ENCODE measurements at regions of chr20 and their contacts with region 1.

Region 1: GRCh38 chr20:62368976-62369814 is 2.1 kb upstream of the LAMA5 start:
- DNase-seq: no peak
- ATAC-seq: peak; percentile 36
- H3K4me3 ChIP-seq: peak overlapping the region; percentile 34 to 83
- H3K27ac ChIP-seq: peak overlapping the region; percentile 74; the same call in 1 of the 2 replicates
- H3K4me1 ChIP-seq: peaks cover 53 to 65% of the 10 kb centered on the region in 2 experiments
- H3K27me3 ChIP-seq: no peaks in the 10 kb centered on the region
- CTCF ChIP-seq: peak in 2 of 3 experiments; percentile 33 to 44; a peak in 3 of 6 replicates
- POLR2A ChIP-seq: no peak
- RAD21 ChIP-seq: no peak

Region 2: GRCh38 chr20:62302341-62303058 is 66.7 kb before region 1 on chr20 and contains the start of gene ADRM1:
- CTCF ChIA-PET with region 1: interaction called, 3 read pairs
- POLR2A ChIA-PET with region 1: no interaction called
- RAD21 ChIA-PET with region 1: no interaction called
- intact Hi-C with region 1: loop called (anchors 5 kb)
- DNase-seq: peak; percentile 88
- ATAC-seq: peak; percentile 78
- H3K4me3 ChIP-seq: peak within 1 kb of the TSS; percentile 95 to 99
- H3K27ac ChIP-seq: peak within 1 kb of the TSS; percentile 95
- H3K4me1 ChIP-seq: peaks cover 17 to 40% of the 10 kb centered on the region in 2 experiments
- H3K27me3 ChIP-seq: no peaks in the 10 kb centered on the region
- CTCF ChIP-seq: peak; percentile 77 to 95 (median 93)
- POLR2A ChIP-seq: peak; percentile 23
- RAD21 ChIP-seq: peak; percentile 66
- total RNA-seq, gene ADRM1: 158 TPM

Region 3: DNA sequence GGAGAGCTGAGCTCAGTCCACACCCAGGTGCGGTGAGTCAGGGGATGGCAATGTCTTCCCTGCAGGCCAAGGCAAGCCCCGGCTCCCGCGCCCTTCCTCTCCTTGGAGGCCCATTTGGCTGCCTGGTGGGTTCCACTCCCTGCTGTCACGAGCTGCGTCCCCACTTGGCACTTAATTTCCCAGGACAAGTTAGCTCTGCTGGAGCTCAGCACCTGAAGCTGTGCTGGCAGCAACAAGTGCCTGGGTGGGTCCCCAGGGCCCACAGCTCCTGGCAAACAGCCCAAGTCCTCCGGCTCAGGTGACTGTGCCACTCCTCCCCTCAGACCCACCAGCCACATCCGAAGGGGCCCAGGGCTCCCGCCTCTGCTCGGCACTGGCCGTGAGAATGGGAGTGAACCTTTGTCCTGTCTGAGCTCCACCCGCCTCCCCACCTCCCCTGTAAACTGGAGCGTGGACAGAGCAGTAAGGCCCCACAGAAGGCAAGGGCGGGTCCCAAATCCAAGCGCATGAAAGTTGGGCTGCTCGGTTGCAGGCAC is 19.0 kb before region 1 on chr20:
- CTCF ChIA-PET with region 1: no interaction called
- POLR2A ChIA-PET with region 1: interaction called, 12 read pairs
- RAD21 ChIA-PET with region 1: interaction called in 1 of 2 experiments, 3 read pairs
- intact Hi-C with region 1: no loop called
- DNase-seq: peak; percentile 87
- ATAC-seq: peak; percentile 87
- H3K4me3 ChIP-seq: peak overlapping the region; percentile 19 to 52
- H3K27ac ChIP-seq: peak overlapping the region; percentile 99
- H3K4me1 ChIP-seq: peaks cover 26 to 48% of the 10 kb centered on the region in 2 experiments
- H3K27me3 ChIP-seq: no peaks in the 10 kb centered on the region
- CTCF ChIP-seq: no peak
- POLR2A ChIP-seq: no peak
- RAD21 ChIP-seq: no peak